Activated T-helper 2 cell treated with anti-CD3 and anti-CD28 coated beads, Interferon-gamma antibody, Interleukin-2, Interleukin-4, amounts not matched to agents 10 μg/mL and 5 μg/mL and 100 μg/mL, durations not matched to agents 14 hours and 24 hours and 36 hours (primary cell): ENCODE measurements at regions of chr17 and their contacts with region 1.

Region 1: DNA sequence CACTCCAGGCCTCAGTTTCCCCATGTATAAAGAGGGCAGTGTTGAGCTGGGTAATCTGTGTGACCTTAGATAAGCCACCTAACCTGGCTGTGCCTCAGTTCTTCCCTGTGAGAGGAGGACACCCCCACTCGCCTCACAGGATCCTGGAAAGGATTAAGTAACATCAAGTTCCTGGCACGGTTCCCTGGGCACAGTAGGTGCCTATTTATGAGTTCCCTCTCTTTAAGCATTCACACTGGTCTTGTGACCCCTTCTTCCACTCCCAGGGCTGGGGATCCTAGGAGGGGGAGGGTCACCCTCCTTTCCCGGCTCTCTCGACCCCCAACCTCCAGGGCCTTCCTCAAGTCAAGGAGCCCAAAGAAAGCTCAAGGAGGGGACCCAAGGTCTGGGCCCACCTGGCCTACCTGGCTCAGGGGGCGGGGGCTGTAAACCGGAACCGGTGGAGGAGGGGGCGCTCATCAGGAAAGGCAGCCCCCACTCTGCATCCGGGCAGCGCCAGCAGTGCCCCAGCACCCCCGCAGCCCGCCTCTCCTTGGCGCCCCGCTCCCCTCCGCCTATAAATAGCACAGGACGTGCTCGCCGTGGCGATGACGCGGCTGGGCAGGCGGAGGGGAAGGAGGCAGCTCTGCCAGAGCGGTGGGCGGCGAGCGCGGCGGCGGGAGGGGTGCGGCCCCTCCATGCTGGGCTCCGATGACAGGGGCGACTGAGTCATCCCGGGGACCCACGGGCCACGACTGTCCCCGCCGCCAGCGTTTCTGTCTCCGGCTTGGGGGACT is 9.4 kb downstream of the RPL19 start:
- DNase-seq: peak; percentile 49
- H3K4me3 Mint-ChIP-seq: peak overlapping the region; percentile 21
- H3K27ac Mint-ChIP-seq: no peak overlapping the region
- H3K4me1 Mint-ChIP-seq: peaks cover 24% of the 10 kb centered on the region
- H3K27me3 Mint-ChIP-seq: peaks cover 6% of the 10 kb centered on the region

Region 2: DNA sequence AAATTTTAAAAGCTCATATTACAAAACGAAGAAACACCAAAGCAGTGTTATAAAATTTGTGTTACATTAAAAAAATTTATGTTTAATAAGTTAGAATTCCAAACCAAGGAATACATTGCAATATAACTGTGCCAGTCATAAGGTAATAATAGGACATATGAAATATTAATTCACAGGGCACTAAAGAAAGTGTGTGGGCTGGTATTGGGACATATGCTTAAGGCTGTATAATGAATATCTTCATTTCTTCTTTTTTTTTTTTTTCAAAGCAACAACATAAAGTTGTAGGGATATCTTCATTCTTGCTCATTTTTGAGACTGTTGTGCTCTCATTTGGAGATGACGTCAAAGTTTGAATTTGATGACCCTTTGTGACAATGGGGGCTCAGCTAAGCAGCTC is 224.8 kb before region 1 on chr17:
- intact Hi-C with region 1: no loop called
- DNase-seq: no peak
- H3K4me3 Mint-ChIP-seq: no peak overlapping the region
- H3K27ac Mint-ChIP-seq: no peak overlapping the region
- H3K4me1 Mint-ChIP-seq: peaks cover 5% of the 10 kb centered on the region
- H3K27me3 Mint-ChIP-seq: peaks cover 16% of the 10 kb centered on the region

Region 3: DNA sequence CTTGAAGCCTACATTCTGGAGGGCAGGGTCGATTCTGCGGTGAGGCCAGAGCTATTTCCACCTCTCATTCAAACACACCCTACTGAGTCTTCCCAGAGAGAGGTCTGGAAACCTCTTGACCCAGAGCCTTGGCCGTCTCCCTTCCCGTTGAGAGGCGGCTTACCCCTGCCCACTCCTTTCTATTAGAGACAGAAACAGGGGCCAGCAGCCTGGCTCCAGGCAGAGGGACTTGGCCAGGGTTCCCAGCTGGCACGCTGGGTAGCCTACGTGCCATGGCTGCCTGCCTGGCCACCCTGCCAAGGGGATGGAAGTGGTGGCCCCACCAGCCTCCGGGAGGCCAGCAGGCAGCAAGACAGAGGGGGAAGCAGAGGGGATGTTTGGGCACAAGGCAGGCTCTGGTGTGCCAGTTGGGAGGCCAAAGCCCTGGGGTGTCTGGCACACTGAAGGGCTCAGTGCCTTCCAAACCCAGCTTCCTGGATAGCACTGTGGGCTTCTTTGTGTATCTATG is 10.2 kb after region 1 on chr17:
- intact Hi-C with region 1: no loop called
- DNase-seq: no peak
- H3K4me3 Mint-ChIP-seq: no peak overlapping the region
- H3K27ac Mint-ChIP-seq: no peak overlapping the region
- H3K4me1 Mint-ChIP-seq: no peaks in the 10 kb centered on the region
- H3K27me3 Mint-ChIP-seq: peaks cover 41% of the 10 kb centered on the region

Region 4: GRCh38 chr17:39235555-39236449 is 26.3 kb after region 1 on chr17:
- intact Hi-C with region 1: loop called (anchors 2 kb)
- DNase-seq: peak; percentile 45
- H3K4me3 Mint-ChIP-seq: no peak overlapping the region
- H3K27ac Mint-ChIP-seq: no peak overlapping the region
- H3K4me1 Mint-ChIP-seq: peaks cover 20% of the 10 kb centered on the region
- H3K27me3 Mint-ChIP-seq: peaks cover 3% of the 10 kb centered on the region

Region 5: DNA sequence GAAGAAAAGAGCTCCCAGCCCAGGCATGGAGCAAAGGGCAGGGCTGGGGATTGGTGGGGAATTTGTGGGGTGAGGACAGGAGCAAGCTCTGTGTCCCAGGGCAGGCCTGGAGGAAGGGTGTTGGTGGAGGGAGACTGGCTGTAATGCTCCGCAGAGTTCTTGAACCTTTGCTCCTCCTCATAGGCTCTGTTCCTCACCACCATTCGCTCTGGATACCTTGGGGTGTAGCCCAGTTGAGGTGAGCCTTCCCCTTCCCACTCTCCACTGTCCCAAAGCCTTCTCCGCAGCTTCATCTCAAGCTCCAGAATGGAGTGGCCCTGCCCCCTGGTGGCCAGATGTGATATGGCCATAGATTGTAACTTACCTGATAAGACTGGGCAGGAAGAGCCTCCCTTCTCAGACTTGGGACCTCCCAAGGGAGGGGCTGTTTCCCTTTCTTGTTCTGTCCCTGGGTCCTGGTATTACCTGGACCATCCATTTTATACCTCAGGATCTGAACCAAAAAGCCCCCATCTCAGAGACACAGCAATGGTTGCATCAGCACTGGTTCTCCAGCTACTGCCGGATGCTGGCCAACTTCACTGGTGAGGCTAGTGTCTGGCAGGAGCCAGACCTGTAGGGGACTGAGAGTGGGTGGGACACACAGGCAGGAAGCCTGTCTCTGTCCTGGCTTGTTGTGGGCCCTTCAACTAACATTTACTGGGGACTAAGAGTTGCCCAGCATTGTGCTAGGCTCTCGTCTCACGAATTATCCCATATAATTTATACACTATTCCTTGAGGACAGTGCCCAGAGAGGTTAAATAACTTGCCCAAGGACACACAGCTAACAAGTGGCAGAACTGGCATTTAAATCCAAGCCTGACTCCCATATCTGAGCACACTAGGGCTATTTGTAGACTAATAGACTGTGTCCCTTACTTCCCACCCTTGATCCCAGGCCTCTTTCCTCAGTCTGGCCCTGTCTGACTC is 35.4 kb after region 1 on chr17:
- intact Hi-C with region 1: loop called (anchors 1 kb)
- DNase-seq: peak; percentile 72
- H3K4me3 Mint-ChIP-seq: no peak overlapping the region
- H3K27ac Mint-ChIP-seq: no peak overlapping the region
- H3K4me1 Mint-ChIP-seq: peaks cover 4% of the 10 kb centered on the region
- H3K27me3 Mint-ChIP-seq: no peaks in the 10 kb centered on the region

Region 6: GRCh38 chr17:39294060-39294459 is 84.6 kb after region 1 on chr17:
- intact Hi-C with region 1: no loop called
- DNase-seq: no peak
- H3K4me3 Mint-ChIP-seq: no peak overlapping the region
- H3K27ac Mint-ChIP-seq: no peak overlapping the region
- H3K4me1 Mint-ChIP-seq: no peaks in the 10 kb centered on the region
- H3K27me3 Mint-ChIP-seq: no peaks in the 10 kb centered on the region

Region 7: GRCh38 chr17:39404542-39405378 is 195.3 kb after region 1 on chr17:
- intact Hi-C with region 1: loop called (anchors 2 kb)
- DNase-seq: no peak
- H3K4me3 Mint-ChIP-seq: peak overlapping the region; percentile 17
- H3K27ac Mint-ChIP-seq: peak overlapping the region; percentile 84
- H3K4me1 Mint-ChIP-seq: peaks cover 42% of the 10 kb centered on the region
- H3K27me3 Mint-ChIP-seq: no peaks in the 10 kb centered on the region

Region 8: GRCh38 chr17:39461113-39461925 is 251.8 kb after region 1 on chr17 and contains the start of gene CDK12:
- intact Hi-C with region 1: loop called (anchors 5 kb)
- DNase-seq: peak; percentile 94
- H3K4me3 Mint-ChIP-seq: peak within 1 kb of the TSS; percentile 96
- H3K27ac Mint-ChIP-seq: peak within 1 kb of the TSS; percentile 99
- H3K4me1 Mint-ChIP-seq: peaks cover 17% of the 10 kb centered on the region
- H3K27me3 Mint-ChIP-seq: no peaks in the 10 kb centered on the region
- total RNA-seq, gene CDK12: 83.9 TPM in 2 replicates